Naive thymus-derived CD4-positive, alpha-beta T cell (primary cell): ENCODE measurements at regions of chr13 and their contacts with region 1.

Region 1: DNA sequence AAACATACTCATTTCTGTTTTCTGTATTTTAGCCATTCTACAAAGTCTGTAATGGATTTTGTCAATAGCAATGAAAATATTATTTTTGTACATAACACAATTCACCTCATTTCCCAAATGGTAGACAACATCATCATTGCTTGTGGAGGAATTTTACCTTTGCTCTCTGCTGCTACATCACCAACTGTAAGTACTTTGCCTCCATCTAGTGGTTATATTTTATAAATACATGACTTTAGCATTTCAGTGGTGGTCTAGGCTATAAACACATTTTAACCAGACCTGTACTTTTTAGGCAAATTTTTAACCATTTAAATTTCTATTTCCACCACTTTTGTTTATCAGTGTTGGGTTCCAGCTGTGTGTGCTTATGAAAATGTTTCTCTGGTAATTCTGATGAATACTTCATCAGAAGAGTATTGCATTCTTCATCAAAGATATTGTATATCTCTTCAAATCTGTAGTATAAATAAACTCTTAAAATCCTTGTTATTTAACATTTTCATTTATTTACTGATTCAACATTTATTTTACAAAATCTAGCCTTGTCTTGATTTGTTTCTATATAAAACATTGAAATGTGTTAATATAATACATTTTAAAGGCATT is 222.4 kb downstream of the NBEA start:
- DNase-seq: peak in 6 of 9 donors; percentile 13 to 50 (median 35)
- ATAC-seq: peak; percentile 64
- H3K4me3 ChIP-seq: no peak overlapping the region
- H3K4me3 Mint-ChIP-seq: no peak overlapping the region
- H3K27ac ChIP-seq: no peak overlapping the region
- H3K27ac Mint-ChIP-seq: no peak overlapping the region
- H3K4me1 ChIP-seq: no peaks in the 10 kb centered on the region
- H3K4me1 Mint-ChIP-seq: peaks cover 5 to 13% (median 9%) of the 10 kb centered on the region in 7 donors
- H3K27me3 ChIP-seq: no peaks in the 10 kb centered on the region
- H3K27me3 Mint-ChIP-seq: no peaks in the 10 kb centered on the region

Region 2: GRCh38 chr13:33228648-33229445 is 1935.6 kb before region 1 on chr13:
- CTCF ChIA-PET with region 1: no interaction called
- POLR2A ChIA-PET with region 1: no interaction called
- intact Hi-C with region 1: loop called (anchors 1 kb)
- DNase-seq: peak in 7 of 9 donors; percentile 4 to 49 (median 37)
- ATAC-seq: peak; percentile 75
- H3K4me3 ChIP-seq: no peak overlapping the region
- H3K4me3 Mint-ChIP-seq: no peak overlapping the region
- H3K27ac ChIP-seq: no peak overlapping the region
- H3K27ac Mint-ChIP-seq: peak overlapping the region in 1 of 9 donors; percentile 73
- H3K4me1 ChIP-seq: peaks cover 0 to 4% of the 10 kb centered on the region in 2 donors
- H3K4me1 Mint-ChIP-seq: peaks cover 0 to 8% (median 6%) of the 10 kb centered on the region in 7 donors
- H3K27me3 ChIP-seq: no peaks in the 10 kb centered on the region
- H3K27me3 Mint-ChIP-seq: peaks cover 0 to 5% (median 4%) of the 10 kb centered on the region in 5 donors

Region 3: GRCh38 chr13:33799950-33800592 is 1364.4 kb before region 1 on chr13:
- CTCF ChIA-PET with region 1: no interaction called
- POLR2A ChIA-PET with region 1: no interaction called
- intact Hi-C with region 1: loop called (anchors 2 kb)
- DNase-seq: peak in 2 of 9 donors; percentile 12 to 13
- ATAC-seq: peak; percentile 46
- H3K4me3 ChIP-seq: no peak overlapping the region
- H3K4me3 Mint-ChIP-seq: peak overlapping the region in 2 of 10 donors; percentile 25 to 54
- H3K27ac ChIP-seq: no peak overlapping the region
- H3K27ac Mint-ChIP-seq: peak overlapping the region in 1 of 9 donors; percentile 5
- H3K4me1 ChIP-seq: no peaks in the 10 kb centered on the region
- H3K4me1 Mint-ChIP-seq: peaks cover 0 to 10% (median 0%) of the 10 kb centered on the region in 7 donors
- H3K27me3 ChIP-seq: no peaks in the 10 kb centered on the region
- H3K27me3 Mint-ChIP-seq: peaks cover 0 to 20% (median 11%) of the 10 kb centered on the region in 5 donors

Region 4: DNA sequence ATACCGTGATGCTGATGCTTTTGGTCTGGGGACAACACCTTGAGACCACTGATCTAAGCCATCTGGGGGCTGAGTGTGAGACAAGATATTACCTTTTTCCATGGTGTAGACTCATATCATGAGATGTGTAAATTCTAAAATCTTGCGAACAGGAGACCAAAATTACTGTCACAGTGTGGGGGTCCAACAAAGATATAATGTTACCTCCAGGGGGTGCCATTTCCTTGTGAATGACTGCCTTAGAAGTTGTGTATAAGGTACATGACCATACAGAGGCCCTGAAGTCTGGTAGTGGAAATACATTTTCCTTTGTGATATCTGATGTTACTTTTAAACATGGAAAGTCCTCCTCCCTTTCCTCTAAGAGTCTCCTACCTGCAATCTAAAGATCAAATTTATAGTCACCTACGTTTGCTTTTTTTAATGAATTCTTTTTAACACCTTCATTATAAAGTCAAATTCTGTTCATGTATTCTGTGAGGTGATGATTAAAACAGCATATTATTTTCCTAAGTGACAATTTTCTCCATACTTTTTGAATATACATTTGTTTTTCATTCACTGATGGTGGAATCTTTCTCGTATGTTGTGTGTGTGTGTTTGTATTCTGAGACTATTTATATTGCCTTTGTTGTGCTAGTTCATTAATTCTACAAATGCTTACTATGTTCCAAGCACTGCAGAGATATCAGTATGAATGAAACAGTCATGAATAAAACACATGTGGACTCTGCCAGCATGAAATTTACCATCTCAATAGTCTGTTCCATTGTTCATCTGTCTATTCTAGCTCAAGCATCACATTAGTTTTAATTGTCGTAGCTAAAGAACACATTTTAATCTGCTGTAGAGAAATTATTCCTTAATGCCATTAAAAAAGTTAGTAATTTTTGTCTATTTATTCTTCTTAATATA is 1232.8 kb before region 1 on chr13:
- CTCF ChIA-PET with region 1: no interaction called
- POLR2A ChIA-PET with region 1: no interaction called
- intact Hi-C with region 1: loop called (anchors 1 kb)
- DNase-seq: no peak
- ATAC-seq: no peak
- H3K4me3 ChIP-seq: no peak overlapping the region
- H3K4me3 Mint-ChIP-seq: no peak overlapping the region
- H3K27ac ChIP-seq: no peak overlapping the region
- H3K27ac Mint-ChIP-seq: no peak overlapping the region
- H3K4me1 ChIP-seq: no peaks in the 10 kb centered on the region
- H3K4me1 Mint-ChIP-seq: no peaks in the 10 kb centered on the region
- H3K27me3 ChIP-seq: no peaks in the 10 kb centered on the region
- H3K27me3 Mint-ChIP-seq: no peaks in the 10 kb centered on the region

Region 5: DNA sequence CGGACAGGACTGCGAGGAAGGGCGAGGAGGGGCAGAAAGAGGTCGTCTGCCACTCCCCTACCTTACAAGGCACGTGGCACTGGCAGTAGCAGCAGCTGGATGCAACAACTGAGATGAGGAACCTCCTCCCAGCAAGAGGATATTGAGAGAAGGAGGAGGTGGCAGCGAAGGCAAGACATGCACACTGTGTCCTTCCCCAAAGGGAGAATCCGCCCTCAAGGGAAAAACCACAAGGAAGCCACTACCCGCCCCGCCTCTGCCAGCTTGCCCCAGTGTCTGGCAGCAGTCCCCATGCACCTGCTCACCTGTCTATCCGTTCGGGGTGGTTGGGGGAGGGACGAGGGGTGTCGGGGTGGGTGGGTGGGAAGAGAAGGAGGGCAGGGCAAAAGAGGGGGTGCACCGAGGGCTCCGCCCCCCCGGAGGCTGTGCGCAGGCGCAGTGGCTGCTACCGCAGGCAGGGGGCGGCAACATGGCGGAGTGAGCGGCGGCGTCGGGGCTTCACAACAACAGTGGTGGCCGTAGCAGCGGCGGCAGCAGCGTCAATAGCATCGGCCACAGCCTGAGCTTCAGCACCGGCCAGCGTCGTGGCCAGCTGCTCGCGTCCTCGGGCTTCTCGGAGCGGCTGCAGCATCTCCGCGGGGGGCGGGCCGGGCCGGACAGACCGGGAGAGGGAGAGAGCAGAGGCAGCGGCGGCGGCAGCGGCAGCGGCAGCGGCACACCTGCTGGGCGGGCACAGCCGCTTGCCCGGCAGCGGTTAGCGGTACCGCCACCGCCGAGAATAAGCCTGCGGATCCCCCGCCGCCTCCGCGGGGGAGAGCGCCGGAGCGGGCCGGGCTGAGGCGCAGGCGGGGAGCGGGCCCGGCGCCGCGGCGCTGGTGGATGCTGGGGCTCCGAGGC is 222.3 kb before region 1 on chr13 and contains the start of gene NBEA:
- CTCF ChIA-PET with region 1: no interaction called
- POLR2A ChIA-PET with region 1: no interaction called
- intact Hi-C with region 1: loop called in 1 of 2 experiments (anchors 5 kb)
- DNase-seq: peak; percentile 73 to 90 (median 85)
- ATAC-seq: peak; percentile 82
- H3K4me3 ChIP-seq: peak within 1 kb of the TSS; percentile 43
- H3K4me3 Mint-ChIP-seq: peak within 1 kb of the TSS; percentile 72 to 94 (median 90)
- H3K27ac ChIP-seq: peak within 1 kb of the TSS; percentile 55
- H3K27ac Mint-ChIP-seq: peak within 1 kb of the TSS in 8 of 9 donors; percentile 18 to 85 (median 78)
- H3K4me1 ChIP-seq: peaks cover 0 to 17% of the 10 kb centered on the region in 2 donors
- H3K4me1 Mint-ChIP-seq: peaks cover 15 to 35% (median 28%) of the 10 kb centered on the region in 7 donors
- H3K27me3 ChIP-seq: peaks cover 0 to 9% of the 10 kb centered on the region in 2 donors
- H3K27me3 Mint-ChIP-seq: peaks cover 37 to 58% (median 47%) of the 10 kb centered on the region in 5 donors
- total RNA-seq, gene NBEA: 0.15 to 6.3 (median 4.3) TPM